B cell (primary cell): ENCODE measurements at regions of chr2 and their contacts with region 1.

Region 1: GRCh38 chr2:40554668-40555285 is 102.9 kb upstream of the SLC8A1 start:
- DNase-seq: peak; percentile 37
- ATAC-seq: peak; percentile 39
- H3K4me3 ChIP-seq: no peak overlapping the region
- H3K4me3 Mint-ChIP-seq: no peak overlapping the region
- H3K27ac ChIP-seq: no peak overlapping the region
- H3K27ac Mint-ChIP-seq: no peak overlapping the region
- H3K4me1 ChIP-seq: no peaks in the 10 kb centered on the region
- H3K4me1 Mint-ChIP-seq: no peaks in the 10 kb centered on the region
- H3K27me3 ChIP-seq: no peaks in the 10 kb centered on the region
- H3K27me3 Mint-ChIP-seq: no peaks in the 10 kb centered on the region
- CTCF ChIP-seq: peak; percentile 83

Region 2: DNA sequence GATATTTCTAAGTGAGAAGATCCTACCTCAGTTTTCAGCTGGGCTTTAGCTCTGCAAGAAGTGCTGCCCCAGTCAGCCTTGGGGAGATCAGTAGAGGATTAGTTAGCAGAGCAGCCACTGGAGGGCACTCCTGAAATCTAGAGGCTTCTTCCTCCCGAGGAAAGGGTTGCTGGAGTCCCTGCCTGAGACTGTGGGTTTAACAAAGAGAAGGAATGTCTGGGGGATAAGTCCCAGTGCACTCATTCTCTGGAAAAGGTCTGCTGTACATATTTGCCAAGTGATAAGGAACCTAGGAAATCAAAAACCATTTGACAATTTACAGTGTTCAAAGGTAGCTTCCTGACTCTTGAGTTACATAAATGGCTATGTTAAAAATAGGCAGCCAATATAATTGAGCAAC is 310.1 kb before region 1 on chr2:
- CTCF ChIA-PET with region 1: interaction called, 11 read pairs
- POLR2A ChIA-PET with region 1: no interaction called
- intact Hi-C with region 1: no loop called
- DNase-seq: peak; percentile 6
- ATAC-seq: no peak
- H3K4me3 ChIP-seq: no peak overlapping the region
- H3K4me3 Mint-ChIP-seq: no peak overlapping the region
- H3K27ac ChIP-seq: no peak overlapping the region
- H3K27ac Mint-ChIP-seq: no peak overlapping the region
- H3K4me1 ChIP-seq: no peaks in the 10 kb centered on the region
- H3K4me1 Mint-ChIP-seq: no peaks in the 10 kb centered on the region
- H3K27me3 ChIP-seq: no peaks in the 10 kb centered on the region
- H3K27me3 Mint-ChIP-seq: no peaks in the 10 kb centered on the region
- CTCF ChIP-seq: no peak

Region 3: GRCh38 chr2:40716879-40717278 is 162.1 kb after region 1 on chr2:
- CTCF ChIA-PET with region 1: no interaction called
- POLR2A ChIA-PET with region 1: no interaction called
- intact Hi-C with region 1: no loop called
- DNase-seq: no peak
- ATAC-seq: no peak
- H3K4me3 ChIP-seq: no peak overlapping the region
- H3K4me3 Mint-ChIP-seq: no peak overlapping the region
- H3K27ac ChIP-seq: no peak overlapping the region
- H3K27ac Mint-ChIP-seq: no peak overlapping the region
- H3K4me1 ChIP-seq: no peaks in the 10 kb centered on the region
- H3K4me1 Mint-ChIP-seq: no peaks in the 10 kb centered on the region
- H3K27me3 ChIP-seq: peaks cover 0 to 2% (median 0%) of the 10 kb centered on the region in 4 experiments
- H3K27me3 Mint-ChIP-seq: no peaks in the 10 kb centered on the region
- CTCF ChIP-seq: no peak